AG04449 (cell line): ENCODE measurements at regions of chr17 and their contacts with region 1.

Region 1: GRCh38 chr17:43878260-43879175 is 28.8 kb downstream of the MPP2 start:
- DNase-seq: peak; percentile 65
- H3K4me3 ChIP-seq: no peak overlapping the region
- CTCF ChIP-seq: peak; percentile 100

Region 2: DNA sequence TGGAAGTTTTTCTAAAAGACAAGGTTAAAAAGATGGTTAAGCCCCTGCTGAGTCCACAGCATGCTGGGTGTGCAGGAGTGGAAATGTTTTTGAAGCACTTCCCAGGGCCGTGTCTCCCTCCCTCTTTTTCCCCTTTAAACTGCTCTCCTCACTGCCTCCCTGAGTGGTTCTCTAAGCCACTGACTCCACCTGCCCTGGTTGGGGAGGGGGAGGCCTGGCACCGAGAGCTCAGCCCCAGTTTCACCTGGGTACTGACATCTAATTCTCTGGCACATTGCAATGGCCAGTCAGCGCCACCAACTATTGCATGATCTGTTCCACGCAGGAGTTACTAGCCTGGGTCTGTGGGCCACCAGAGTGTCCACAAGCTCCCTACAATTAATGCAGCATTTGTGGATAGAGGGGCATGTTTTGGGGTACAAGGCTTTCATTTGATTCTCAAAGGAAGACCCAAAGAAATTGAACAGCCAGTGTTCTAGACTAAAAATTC is 68.2 kb before region 1 on chr17:
- CTCF ChIA-PET with region 1: no interaction called
- POLR2A ChIA-PET with region 1: no interaction called
- DNase-seq: no peak
- H3K4me3 ChIP-seq: no peak overlapping the region
- CTCF ChIP-seq: no peak

Region 3: DNA sequence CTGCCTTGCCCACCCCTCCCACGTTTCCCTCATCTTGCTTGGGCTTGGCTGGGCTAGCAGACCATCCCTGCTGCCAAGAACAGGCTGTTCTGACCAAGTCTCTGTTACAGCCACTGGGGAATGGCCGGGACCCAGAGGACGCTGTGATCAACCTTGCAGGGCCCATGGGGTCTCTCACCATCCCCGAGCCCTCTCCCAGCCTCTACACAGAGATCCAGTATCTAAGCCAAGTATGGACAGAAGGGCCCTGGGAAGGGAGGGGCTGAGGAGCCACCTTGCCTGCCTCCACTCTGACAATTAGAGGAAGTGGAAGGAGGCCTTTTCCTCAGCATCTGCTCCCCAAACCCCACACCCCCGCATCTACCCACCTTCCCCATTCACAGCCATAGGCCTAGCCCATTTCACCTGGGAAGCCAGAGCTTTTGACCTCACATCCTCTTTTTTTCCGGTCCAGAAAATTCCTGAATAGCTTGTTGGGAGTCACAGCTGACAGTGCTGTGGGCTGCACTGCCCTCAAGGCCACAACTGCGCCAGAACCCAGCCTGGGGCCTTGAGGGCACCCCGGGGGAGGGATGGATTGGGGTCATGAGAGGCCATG is 17.4 kb before region 1 on chr17:
- CTCF ChIA-PET with region 1: interaction called, 104 read pairs
- POLR2A ChIA-PET with region 1: no interaction called
- DNase-seq: no peak
- H3K4me3 ChIP-seq: no peak overlapping the region
- CTCF ChIP-seq: no peak

Region 4: DNA sequence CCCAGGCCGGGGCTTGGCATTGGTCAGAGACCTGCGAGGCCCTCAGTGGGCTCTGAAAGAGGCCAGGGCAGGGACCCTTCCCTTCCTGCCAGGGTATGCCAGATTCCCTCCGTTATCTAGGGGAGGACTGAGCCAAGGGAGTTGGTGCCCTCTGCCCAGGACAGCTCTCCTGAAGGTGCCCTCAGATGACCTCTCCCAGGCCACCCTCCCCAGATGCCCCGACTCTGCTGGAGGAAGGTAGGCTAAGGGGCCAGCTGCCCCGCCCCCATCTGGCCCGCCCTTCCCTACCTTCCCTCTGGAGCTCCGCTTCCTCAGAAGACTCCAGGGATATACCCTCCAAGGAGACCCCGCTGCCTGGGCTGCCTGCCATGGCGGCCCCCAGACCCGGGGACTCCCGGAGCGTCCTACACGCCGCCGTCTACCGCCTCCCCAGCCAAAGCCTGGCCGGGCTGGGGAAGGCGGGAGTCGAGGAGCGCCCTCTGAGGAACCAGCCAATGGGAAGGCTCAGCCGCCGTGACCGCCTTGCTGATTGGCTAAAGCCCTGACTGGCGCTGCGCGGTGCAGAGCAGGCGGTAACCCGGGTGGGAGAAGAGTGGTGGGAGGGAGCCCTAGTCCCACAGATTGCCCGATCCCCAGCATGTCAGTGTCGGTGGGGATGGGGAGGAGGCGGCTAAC is 21.8 kb after region 1 on chr17:
- CTCF ChIA-PET with region 1: interaction called, 99 read pairs
- POLR2A ChIA-PET with region 1: no interaction called
- DNase-seq: no peak
- H3K4me3 ChIP-seq: peak overlapping the region; percentile 62
- CTCF ChIP-seq: no peak

Region 5: GRCh38 chr17:43917348-43918018 is 39.0 kb after region 1 on chr17:
- CTCF ChIA-PET with region 1: interaction called, 12 read pairs
- POLR2A ChIA-PET with region 1: no interaction called
- DNase-seq: no peak
- H3K4me3 ChIP-seq: no peak overlapping the region
- CTCF ChIP-seq: peak; percentile 71

Region 6: GRCh38 chr17:44006598-44007345 is 128.3 kb after region 1 on chr17:
- CTCF ChIA-PET with region 1: interaction called, 11 read pairs
- POLR2A ChIA-PET with region 1: no interaction called
- DNase-seq: peak; percentile 71
- H3K4me3 ChIP-seq: peak overlapping the region; percentile 84
- CTCF ChIP-seq: peak; percentile 82